WTC11 (cell line): ENCODE measurements at regions of chr11 and their contacts with region 1.

Region 1: DNA sequence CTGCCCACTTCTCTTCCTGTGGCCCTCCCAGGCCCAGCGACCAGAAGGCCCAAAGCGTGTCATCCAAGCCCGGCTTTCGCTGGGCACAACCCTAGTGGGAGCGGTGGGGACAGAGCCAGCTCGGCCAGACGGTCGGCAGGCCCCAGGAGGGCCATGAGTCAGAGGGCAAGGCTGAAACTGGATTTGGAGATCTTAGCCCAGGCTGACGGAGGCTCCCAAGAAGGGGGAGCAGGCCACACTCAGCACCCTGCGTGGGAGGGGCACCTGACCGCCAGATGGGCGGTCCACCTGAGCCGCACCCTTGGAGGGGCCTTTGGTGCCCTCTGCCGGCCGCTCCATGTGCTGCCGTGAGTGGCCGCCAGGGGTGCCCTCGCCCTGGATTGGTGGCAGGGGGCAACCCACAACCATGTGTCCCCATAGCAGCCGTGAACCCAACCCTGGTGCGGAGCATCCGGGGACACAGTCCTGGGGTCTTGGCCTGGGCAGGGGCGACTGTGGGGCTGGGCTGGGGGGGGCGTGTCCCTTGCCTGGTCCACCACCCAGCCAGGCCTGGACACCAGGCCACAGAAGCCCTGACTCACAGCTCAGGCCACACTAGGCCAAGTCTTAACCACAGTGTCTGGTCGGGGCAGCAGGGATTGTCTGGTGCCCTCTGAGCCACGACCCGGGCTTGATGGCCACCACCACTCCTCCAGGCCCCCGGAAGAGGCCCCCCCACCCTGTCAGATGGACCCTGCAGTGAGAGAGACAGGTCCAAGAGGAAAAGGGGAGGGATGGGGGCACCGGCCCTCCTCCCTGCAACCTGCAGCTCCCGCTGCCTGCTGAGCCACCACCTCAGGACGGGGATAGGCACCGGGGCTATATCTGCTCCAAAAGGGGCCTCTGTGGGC is 19.2 kb upstream of the TALDO1 start:
- DNase-seq: peak; percentile 92
- ATAC-seq: peak; percentile 81
- H3K4me3 Mint-ChIP-seq: no peak overlapping the region
- H3K27ac Mint-ChIP-seq: no peak overlapping the region
- H3K4me1 Mint-ChIP-seq: peaks cover 11% of the 10 kb centered on the region
- H3K27me3 Mint-ChIP-seq: peaks cover 8% of the 10 kb centered on the region
- CTCF ChIP-seq: peak; percentile 96

Region 2: GRCh38 chr11:639330-639955 is 88.7 kb before region 1 on chr11:
- CTCF ChIA-PET with region 1: interaction called, 13 read pairs
- POLR2A ChIA-PET with region 1: no interaction called
- DNase-seq: no peak
- ATAC-seq: no peak
- H3K4me3 Mint-ChIP-seq: peak overlapping the region; percentile 61
- H3K27ac Mint-ChIP-seq: no peak overlapping the region
- H3K4me1 Mint-ChIP-seq: peaks cover 21% of the 10 kb centered on the region
- H3K27me3 Mint-ChIP-seq: peaks cover 51% of the 10 kb centered on the region
- CTCF ChIP-seq: no peak

Region 3: GRCh38 chr11:706957-707816 is 20.9 kb before region 1 on chr11:
- CTCF ChIA-PET with region 1: interaction called, 32 read pairs
- POLR2A ChIA-PET with region 1: interaction called, 3 read pairs
- DNase-seq: peak; percentile 47
- ATAC-seq: peak; percentile 46
- H3K4me3 Mint-ChIP-seq: peak overlapping the region; percentile 62
- H3K27ac Mint-ChIP-seq: no peak overlapping the region
- H3K4me1 Mint-ChIP-seq: peaks cover 30% of the 10 kb centered on the region
- H3K27me3 Mint-ChIP-seq: no peaks in the 10 kb centered on the region
- CTCF ChIP-seq: 0 out of 2 replicates have a peak, but pooled peaks have one; percentile 13

Region 4: DNA sequence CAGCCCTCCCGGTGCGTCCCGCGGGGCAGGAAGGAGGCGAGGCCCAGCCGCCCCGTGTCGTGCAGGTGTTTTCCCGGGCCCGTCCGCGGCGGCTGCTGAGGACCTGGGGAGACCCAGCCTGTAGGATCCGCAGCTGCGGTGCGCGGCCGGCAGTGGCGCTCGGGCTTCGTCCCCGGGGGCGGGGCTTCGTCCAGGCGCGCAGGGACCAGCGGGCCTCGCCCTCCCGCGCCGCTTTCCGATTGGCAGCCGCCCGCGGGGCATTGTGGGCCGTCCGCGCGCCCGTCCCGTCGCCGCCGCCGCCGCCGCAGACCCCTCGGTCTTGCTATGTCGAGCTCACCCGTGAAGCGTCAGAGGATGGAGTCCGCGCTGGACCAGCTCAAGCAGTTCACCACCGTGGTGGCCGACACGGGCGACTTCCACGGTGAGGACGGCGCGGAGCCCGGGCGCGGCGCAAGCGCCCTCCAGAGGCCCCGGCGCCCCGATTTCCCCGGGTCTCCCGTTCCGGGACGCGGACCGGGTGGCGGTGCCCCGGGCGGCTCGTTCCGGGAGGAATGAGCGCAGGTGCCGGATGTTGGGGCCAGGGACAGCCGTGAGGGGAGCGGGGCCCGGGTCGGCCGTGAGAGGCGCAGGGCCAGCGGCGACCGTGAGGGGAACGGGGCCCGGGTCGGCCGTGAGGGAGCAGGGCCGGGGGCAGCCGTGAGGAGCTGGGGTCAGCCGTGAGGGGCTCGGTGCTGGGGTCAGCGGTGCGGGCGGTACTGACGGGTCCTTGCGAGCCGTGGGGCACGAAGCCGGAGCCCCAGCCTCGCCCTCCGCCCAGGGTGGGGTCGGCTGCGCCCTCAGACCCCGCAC is 19.3 kb after region 1 on chr11 and contains the start of gene TALDO1:
- CTCF ChIA-PET with region 1: interaction called, 37 read pairs
- POLR2A ChIA-PET with region 1: interaction called, 8 read pairs
- DNase-seq: peak; percentile 94
- ATAC-seq: peak; percentile 87
- H3K4me3 Mint-ChIP-seq: peak within 1 kb of the TSS; percentile 80
- H3K27ac Mint-ChIP-seq: peak within 1 kb of the TSS; percentile 96
- H3K4me1 Mint-ChIP-seq: peaks cover 36% of the 10 kb centered on the region
- H3K27me3 Mint-ChIP-seq: no peaks in the 10 kb centered on the region
- CTCF ChIP-seq: no peak
- total RNA-seq, gene TALDO1: 314 to 352 TPM (median 343 TPM) in 3 replicates

Region 5: DNA sequence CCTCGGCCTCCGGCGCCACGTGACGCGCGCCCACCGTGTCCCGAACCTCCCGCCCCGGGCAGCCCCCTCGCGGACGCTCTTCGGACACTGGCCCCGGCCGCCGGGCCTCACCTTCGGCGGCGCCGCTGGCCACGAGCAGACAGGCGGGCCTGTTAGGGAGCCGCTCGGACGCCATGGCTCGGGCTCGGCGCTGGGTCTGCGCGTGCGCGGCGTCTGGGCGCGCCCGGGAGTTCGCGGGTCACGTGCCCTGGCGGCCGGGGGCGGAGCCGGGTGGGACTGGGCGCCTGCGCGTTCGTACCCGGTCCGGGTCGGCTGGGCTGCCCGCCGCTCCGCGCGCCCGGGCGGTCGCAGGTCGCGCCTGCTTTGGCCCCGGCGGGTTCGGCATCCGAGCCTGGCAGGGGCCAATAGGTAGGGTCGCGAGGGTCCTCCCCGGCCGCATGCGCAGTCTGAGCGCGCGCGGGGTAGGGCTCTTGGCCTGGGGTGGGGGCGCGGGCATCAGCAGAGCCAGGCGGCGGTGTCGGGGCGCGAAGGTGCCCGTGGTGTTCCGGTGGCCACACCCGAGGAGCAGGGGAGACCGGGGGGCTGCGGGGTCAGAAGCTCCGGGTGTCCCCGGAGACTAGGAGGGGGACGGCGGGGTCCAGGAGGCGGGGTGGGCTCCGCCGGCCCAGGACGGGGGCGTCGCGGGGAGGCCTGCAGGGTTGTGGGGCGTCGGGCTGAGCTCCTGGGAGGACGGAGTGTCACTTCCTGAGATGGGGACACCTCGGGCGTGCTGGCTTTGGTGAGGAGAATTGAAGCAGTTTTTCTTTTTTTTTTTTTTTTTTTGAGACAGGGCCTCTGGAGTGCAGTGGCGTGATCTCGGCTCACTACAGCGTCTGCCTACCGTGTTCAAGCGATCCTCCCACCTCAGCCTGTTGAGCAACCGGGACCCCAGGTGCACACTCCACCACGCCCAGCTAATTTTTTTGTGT is 49.5 kb after region 1 on chr11 and contains the start of gene GATD1:
- CTCF ChIA-PET with region 1: interaction called, 12 read pairs
- POLR2A ChIA-PET with region 1: interaction called, 4 read pairs
- DNase-seq: peak; percentile 94
- ATAC-seq: peak; percentile 71
- H3K4me3 Mint-ChIP-seq: peak within 1 kb of the TSS; percentile 88
- H3K27ac Mint-ChIP-seq: peak within 1 kb of the TSS; percentile 83
- H3K4me1 Mint-ChIP-seq: peaks cover 25% of the 10 kb centered on the region
- H3K27me3 Mint-ChIP-seq: no peaks in the 10 kb centered on the region
- CTCF ChIP-seq: no peak
- total RNA-seq, gene GATD1: 81.9 to 87.6 TPM (median 87.5 TPM) in 3 replicates

Region 6: GRCh38 chr11:859509-860131 is 131.5 kb after region 1 on chr11:
- CTCF ChIA-PET with region 1: no interaction called
- POLR2A ChIA-PET with region 1: no interaction called
- DNase-seq: no peak
- ATAC-seq: no peak
- H3K4me3 Mint-ChIP-seq: no peak overlapping the region
- H3K27ac Mint-ChIP-seq: no peak overlapping the region
- H3K4me1 Mint-ChIP-seq: peaks cover 40% of the 10 kb centered on the region
- H3K27me3 Mint-ChIP-seq: peaks cover 3% of the 10 kb centered on the region; the same call in 1 of the 2 replicates
- CTCF ChIP-seq: no peak